ENCODE measurements at regions of chr15 and their contacts with region 1.

Region 1: GRCh38 chr15:59814409-59814808 is 125.3 kb upstream of the BNIP2 start:
- DNase-seq: peak in 6 of 9 experiments; percentile 20 to 79 (median 58)
- ATAC-seq: peak; percentile 89
- H3K4me3 ChIP-seq: no peak overlapping the region
- H3K4me3 Mint-ChIP-seq: peak overlapping the region; percentile 12
- H3K27ac ChIP-seq: peak overlapping the region in 1 of 2 experiments; percentile 22
- H3K27ac Mint-ChIP-seq: peak overlapping the region; percentile 87
- H3K4me1 ChIP-seq: peaks cover 22% of the 10 kb centered on the region
- H3K4me1 Mint-ChIP-seq: peaks cover 36% of the 10 kb centered on the region
- H3K27me3 ChIP-seq: no peaks in the 10 kb centered on the region
- H3K27me3 Mint-ChIP-seq: no peaks in the 10 kb centered on the region
- CTCF ChIP-seq: no peak

Region 2: DNA sequence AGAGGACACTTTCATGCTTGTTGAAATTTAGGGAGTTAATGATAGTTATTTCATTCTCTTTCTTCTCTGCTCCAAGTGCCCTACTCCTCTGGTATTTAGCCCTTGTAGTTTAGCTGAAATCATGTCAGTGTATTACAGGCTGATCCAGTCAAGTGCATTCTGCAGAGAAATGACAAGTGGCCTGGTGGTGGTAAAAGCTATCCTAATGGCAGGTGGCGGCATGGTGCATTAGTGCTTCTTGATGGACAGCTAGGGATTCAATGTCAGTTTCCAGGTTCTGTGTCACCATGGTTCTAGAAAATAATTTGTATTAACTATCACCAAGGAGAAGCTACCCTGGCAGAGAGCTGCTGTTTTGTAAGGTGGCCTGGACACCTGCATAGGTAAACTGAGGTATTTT is 35.3 kb before region 1 on chr15:
- CTCF ChIA-PET with region 1: no interaction called
- POLR2A ChIA-PET with region 1: interaction called, 4 read pairs
- intact Hi-C with region 1: loop called in 1 of 2 experiments (anchors 5 kb)
- DNase-seq: no peak
- ATAC-seq: no peak
- H3K4me3 ChIP-seq: no peak overlapping the region
- H3K4me3 Mint-ChIP-seq: no peak overlapping the region
- H3K27ac ChIP-seq: no peak overlapping the region
- H3K27ac Mint-ChIP-seq: no peak overlapping the region
- H3K4me1 ChIP-seq: peaks cover 8% of the 10 kb centered on the region
- H3K4me1 Mint-ChIP-seq: peaks cover 6% of the 10 kb centered on the region
- H3K27me3 ChIP-seq: no peaks in the 10 kb centered on the region
- H3K27me3 Mint-ChIP-seq: no peaks in the 10 kb centered on the region
- CTCF ChIP-seq: no peak

Region 3: DNA sequence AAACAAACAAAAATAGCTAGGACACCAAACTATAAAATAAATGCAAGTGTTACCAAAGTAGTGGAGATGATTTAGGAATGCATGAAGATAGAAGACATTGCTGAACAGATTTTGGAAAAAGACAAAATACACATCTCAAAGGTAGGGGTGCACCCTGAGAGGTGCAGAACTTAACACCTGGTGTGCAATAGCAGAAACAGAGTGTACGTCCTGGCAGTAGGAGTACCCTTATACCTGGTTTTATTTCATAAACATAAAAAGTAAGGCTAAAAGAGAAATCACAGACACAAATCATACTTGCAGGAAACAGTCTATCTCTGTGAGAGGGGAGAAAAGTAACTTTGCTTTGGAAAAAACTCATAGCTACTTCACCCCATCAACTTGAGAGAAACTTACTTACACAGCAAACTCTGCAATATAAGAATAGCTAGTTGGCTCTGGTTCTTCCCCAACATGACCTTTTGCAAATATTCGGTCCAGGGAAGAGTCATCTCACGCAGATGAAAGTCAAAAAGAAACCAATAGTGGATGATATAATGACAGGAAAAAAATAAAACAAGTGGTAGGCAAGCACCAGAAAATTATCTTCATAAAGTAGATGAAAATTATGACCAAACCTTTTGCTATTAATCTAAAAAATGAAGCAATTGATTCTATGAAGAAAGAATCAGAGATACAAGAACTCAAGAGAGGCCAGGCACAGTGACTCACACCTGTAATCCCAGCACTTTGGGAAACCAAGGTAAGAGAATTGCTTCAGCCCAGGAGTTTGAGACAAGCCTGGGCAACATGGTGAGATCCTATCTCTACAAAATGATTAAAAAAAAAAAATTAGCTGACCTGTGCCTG is 16.4 kb before region 1 on chr15:
- CTCF ChIA-PET with region 1: interaction called, 3 read pairs
- POLR2A ChIA-PET with region 1: interaction called, 21 read pairs
- intact Hi-C with region 1: no loop called
- DNase-seq: no peak
- ATAC-seq: no peak
- H3K4me3 ChIP-seq: peak overlapping the region in 1 of 2 experiments; percentile 11
- H3K4me3 Mint-ChIP-seq: peak overlapping the region; percentile 49
- H3K27ac ChIP-seq: peak overlapping the region; percentile 21 to 37
- H3K27ac Mint-ChIP-seq: peak overlapping the region; percentile 85
- H3K4me1 ChIP-seq: peaks cover 66% of the 10 kb centered on the region
- H3K4me1 Mint-ChIP-seq: peaks cover 76% of the 10 kb centered on the region
- H3K27me3 ChIP-seq: no peaks in the 10 kb centered on the region
- H3K27me3 Mint-ChIP-seq: no peaks in the 10 kb centered on the region
- CTCF ChIP-seq: no peak